Activated CD4-positive, alpha-beta memory T cell treated with anti-CD3 and anti-CD28 coated beads, Interleukin-2, amount 10 ng/mL, durations not matched to agents 7 days and 5 days (primary cell): ENCODE measurements at regions of chr11 and their contacts with region 1.

Region 1: GRCh38 chr11:66677599-66678375 is at the start of gene RBM4B:
- DNase-seq: peak; percentile 96
- H3K4me3 Mint-ChIP-seq: peak within 1 kb of the TSS; percentile 85
- H3K27ac Mint-ChIP-seq: peak within 1 kb of the TSS; percentile 97
- H3K4me1 Mint-ChIP-seq: peaks cover 36% of the 10 kb centered on the region
- H3K27me3 Mint-ChIP-seq: no peaks in the 10 kb centered on the region
- total RNA-seq, gene RBM4B: 19.6 to 20.1 TPM

Region 2: GRCh38 chr11:66408488-66409214 is 269.1 kb before region 1 on chr11:
- CTCF ChIA-PET with region 1: interaction called, 43 read pairs
- POLR2A ChIA-PET with region 1: interaction called, 3 read pairs
- DNase-seq: peak; percentile 91
- H3K4me3 Mint-ChIP-seq: peak overlapping the region; percentile 62
- H3K27ac Mint-ChIP-seq: no peak overlapping the region
- H3K4me1 Mint-ChIP-seq: peaks cover 5% of the 10 kb centered on the region
- H3K27me3 Mint-ChIP-seq: peaks cover 18% of the 10 kb centered on the region

Region 3: GRCh38 chr11:66480117-66480938 is 197.5 kb before region 1 on chr11 and contains the start of gene DPP3:
- CTCF ChIA-PET with region 1: interaction called, 13 read pairs
- POLR2A ChIA-PET with region 1: no interaction called
- DNase-seq: peak; percentile 97
- H3K4me3 Mint-ChIP-seq: peak within 1 kb of the TSS; percentile 78
- H3K27ac Mint-ChIP-seq: peak within 1 kb of the TSS; percentile 86
- H3K4me1 Mint-ChIP-seq: peaks cover 27% of the 10 kb centered on the region
- H3K27me3 Mint-ChIP-seq: no peaks in the 10 kb centered on the region
- total RNA-seq, gene DPP3: 59.3 to 60.6 TPM

Region 4: GRCh38 chr11:66592457-66593302 is 85.1 kb before region 1 on chr11 and contains the starts of genes CCDC87 and CCS:
- CTCF ChIA-PET with region 1: interaction called, 24 read pairs
- POLR2A ChIA-PET with region 1: interaction called, 15 read pairs
- DNase-seq: peak; percentile 99
- H3K4me3 Mint-ChIP-seq: peak within 1 kb of the TSS; percentile 100
- H3K27ac Mint-ChIP-seq: peak within 1 kb of the TSS; percentile 92
- H3K4me1 Mint-ChIP-seq: peaks cover 37% of the 10 kb centered on the region
- H3K27me3 Mint-ChIP-seq: no peaks in the 10 kb centered on the region
- total RNA-seq, gene CCDC87: not detected
- total RNA-seq, gene CCS: 32.8 to 33.2 TPM

Region 5: GRCh38 chr11:66663741-66664296 is 14.0 kb before region 1 on chr11:
- CTCF ChIA-PET with region 1: interaction called, 8 read pairs
- POLR2A ChIA-PET with region 1: interaction called, 11 read pairs
- DNase-seq: no peak
- H3K4me3 Mint-ChIP-seq: no peak overlapping the region
- H3K27ac Mint-ChIP-seq: no peak overlapping the region
- H3K4me1 Mint-ChIP-seq: peaks cover 4% of the 10 kb centered on the region
- H3K27me3 Mint-ChIP-seq: no peaks in the 10 kb centered on the region